ENCODE measurements at regions of chr13 and their contacts with region 1.

Region 1: GRCh38 chr13:49443704-49444523 is at the starts of genes CAB39L and SETDB2:
- DNase-seq: peak; percentile 99
- H3K4me3 Mint-ChIP-seq: peak within 1 kb of the TSS; percentile 92
- H3K27ac Mint-ChIP-seq: peak within 1 kb of the TSS; percentile 96
- H3K4me1 Mint-ChIP-seq: peaks cover 56% of the 10 kb centered on the region
- H3K27me3 Mint-ChIP-seq: no peaks in the 10 kb centered on the region
- total RNA-seq, gene CAB39L: 3.8 to 4.5 TPM
- total RNA-seq, gene SETDB2: 15.8 to 16.2 TPM

Region 2: DNA sequence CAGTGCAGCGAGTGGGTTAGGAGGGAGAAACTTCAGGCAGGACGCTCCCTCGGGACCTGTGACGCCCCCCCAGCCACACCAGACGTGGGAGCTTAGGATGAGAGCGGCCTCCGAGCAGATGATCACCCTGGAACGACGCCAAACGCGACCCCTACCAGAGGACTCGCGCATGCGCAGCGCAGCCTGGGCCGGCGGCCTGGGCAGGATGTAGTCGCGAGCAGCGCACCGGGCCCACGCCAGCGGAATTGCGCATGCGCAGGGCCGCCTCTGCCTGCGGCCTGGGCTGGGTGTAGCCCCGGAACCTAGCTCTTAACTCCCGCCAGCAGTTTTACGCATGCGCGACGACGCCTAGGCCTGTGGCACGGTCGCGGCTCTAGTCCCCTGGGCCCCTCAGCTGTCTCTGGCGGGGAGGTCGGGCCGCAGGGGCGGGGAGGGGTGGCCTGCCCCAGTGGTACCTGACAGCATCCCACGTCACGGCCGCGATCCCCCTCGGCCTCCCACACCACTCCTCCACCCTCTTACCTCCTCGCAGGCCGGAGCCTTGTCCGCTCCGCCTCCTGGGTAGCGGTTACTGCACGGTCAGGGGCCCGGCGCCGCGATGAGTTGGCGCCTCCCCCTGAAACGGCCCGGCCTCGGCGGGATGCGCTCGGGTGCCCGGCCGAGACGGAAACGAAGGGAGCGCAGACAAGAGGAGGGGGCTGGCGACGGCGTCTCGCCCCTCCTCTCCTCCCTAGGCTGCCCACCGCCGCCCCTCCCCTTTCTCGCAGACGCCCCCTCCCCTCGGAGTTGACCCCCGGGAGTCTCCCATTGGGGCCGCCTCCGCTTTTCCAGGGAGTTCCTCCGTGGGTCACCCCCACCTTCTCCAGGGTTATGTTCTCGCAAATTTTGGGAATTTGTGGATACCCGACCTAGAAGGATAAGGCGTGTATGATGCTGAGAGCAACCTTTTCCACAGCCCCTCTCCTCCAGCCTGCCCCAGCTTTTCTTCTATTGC is 911.1 kb before region 1 on chr13 and contains the start of gene RCBTB2:
- CTCF ChIA-PET with region 1: no interaction called
- intact Hi-C with region 1: loop called (anchors 1 kb)
- DNase-seq: peak; percentile 98
- H3K4me3 Mint-ChIP-seq: peak within 1 kb of the TSS; percentile 93
- H3K27ac Mint-ChIP-seq: peak within 1 kb of the TSS; percentile 97
- H3K4me1 Mint-ChIP-seq: peaks cover 17% of the 10 kb centered on the region
- H3K27me3 Mint-ChIP-seq: no peaks in the 10 kb centered on the region
- total RNA-seq, gene RCBTB2: 1.2 to 1.4 TPM

Region 3: GRCh38 chr13:49110122-49110912 is 333.6 kb before region 1 on chr13:
- CTCF ChIA-PET with region 1: no interaction called
- intact Hi-C with region 1: loop called (anchors 1 kb)
- DNase-seq: peak; percentile 87
- H3K4me3 Mint-ChIP-seq: peak overlapping the region; percentile 75
- H3K27ac Mint-ChIP-seq: peak overlapping the region; percentile 84
- H3K4me1 Mint-ChIP-seq: peaks cover 25% of the 10 kb centered on the region
- H3K27me3 Mint-ChIP-seq: no peaks in the 10 kb centered on the region

Region 4: DNA sequence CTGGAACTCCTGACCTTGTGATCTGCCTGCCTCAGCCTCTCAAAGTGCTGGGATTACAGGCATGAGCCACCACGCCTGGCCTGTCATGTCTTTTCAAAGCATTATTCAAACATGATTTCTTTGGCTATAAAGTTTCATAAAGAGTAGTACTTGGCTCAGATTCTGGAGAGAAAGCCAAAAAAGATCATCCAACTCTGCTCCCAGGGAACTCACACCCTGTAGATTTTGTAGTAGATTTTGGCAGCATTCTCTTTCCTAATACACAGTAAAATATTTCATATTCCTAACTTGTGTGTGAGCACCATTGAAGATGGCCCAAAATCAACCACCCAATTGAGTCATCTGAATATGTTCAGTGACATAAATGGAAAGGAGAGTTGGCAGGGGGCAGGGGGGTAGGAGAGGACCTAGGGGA is 48.5 kb before region 1 on chr13:
- CTCF ChIA-PET with region 1: no interaction called
- intact Hi-C with region 1: no loop called
- DNase-seq: no peak
- H3K4me3 Mint-ChIP-seq: no peak overlapping the region
- H3K27ac Mint-ChIP-seq: no peak overlapping the region
- H3K4me1 Mint-ChIP-seq: no peaks in the 10 kb centered on the region
- H3K27me3 Mint-ChIP-seq: no peaks in the 10 kb centered on the region

Region 5: GRCh38 chr13:49464621-49465325 is 20.9 kb after region 1 on chr13:
- CTCF ChIA-PET with region 1: no interaction called
- intact Hi-C with region 1: no loop called
- DNase-seq: no peak
- H3K4me3 Mint-ChIP-seq: no peak overlapping the region
- H3K27ac Mint-ChIP-seq: no peak overlapping the region
- H3K4me1 Mint-ChIP-seq: no peaks in the 10 kb centered on the region
- H3K27me3 Mint-ChIP-seq: no peaks in the 10 kb centered on the region

Region 6: DNA sequence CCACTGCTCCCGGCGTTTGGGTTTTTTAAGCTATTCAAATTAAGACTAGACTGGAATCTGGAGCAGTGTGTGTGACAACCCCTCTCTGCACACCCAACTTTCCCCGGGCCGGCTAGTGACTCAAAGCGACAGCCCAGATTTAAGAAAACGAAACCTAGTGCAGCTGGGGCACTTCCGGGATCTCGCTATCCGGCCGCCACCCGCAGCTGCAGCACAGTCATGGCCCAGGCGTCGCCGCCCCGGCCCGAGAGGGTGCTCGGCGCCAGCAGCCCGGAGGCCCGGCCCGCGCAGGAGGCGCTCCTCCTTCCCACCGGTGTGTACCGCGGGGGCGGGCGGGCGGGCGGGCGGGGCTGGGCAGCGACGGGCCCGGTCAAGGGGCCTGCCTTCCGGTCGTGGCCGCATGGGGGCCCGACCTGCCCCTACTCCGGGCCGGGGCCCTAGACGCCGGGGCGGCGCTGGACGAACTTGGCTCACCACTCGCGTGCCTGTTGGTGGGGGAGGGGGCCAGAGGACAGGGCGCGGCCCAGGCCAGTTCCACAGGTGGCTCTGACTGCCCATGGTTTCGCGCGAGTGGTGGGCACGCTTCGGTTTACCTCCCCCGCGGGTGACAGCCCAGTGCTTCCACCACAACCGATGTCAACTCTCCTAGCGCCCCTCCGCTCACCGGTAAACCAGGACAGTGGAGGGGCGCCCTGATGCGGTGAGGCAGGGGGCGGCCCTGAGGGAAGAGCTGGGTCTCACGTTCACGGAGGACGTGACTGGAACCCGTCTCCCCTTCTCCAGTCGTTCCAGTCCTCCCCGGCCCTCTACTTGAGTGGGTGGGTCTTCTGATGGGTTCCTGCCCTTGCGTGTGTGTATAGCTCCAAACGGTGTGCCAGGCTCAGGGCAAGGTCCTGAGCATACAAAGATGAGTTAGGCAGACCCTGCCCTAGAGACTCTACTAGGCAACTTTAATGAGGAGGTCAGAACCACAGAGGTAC is 52.2 kb after region 1 on chr13 and contains the start of gene PHF11:
- CTCF ChIA-PET with region 1: interaction called, 8 read pairs
- intact Hi-C with region 1: loop called (anchors 1 kb)
- DNase-seq: peak; percentile 95
- H3K4me3 Mint-ChIP-seq: peak within 1 kb of the TSS; percentile 91
- H3K27ac Mint-ChIP-seq: peak within 1 kb of the TSS; percentile 96
- H3K4me1 Mint-ChIP-seq: peaks cover 49% of the 10 kb centered on the region
- H3K27me3 Mint-ChIP-seq: no peaks in the 10 kb centered on the region
- total RNA-seq, gene PHF11: 91.4 to 96.9 TPM

Region 7: DNA sequence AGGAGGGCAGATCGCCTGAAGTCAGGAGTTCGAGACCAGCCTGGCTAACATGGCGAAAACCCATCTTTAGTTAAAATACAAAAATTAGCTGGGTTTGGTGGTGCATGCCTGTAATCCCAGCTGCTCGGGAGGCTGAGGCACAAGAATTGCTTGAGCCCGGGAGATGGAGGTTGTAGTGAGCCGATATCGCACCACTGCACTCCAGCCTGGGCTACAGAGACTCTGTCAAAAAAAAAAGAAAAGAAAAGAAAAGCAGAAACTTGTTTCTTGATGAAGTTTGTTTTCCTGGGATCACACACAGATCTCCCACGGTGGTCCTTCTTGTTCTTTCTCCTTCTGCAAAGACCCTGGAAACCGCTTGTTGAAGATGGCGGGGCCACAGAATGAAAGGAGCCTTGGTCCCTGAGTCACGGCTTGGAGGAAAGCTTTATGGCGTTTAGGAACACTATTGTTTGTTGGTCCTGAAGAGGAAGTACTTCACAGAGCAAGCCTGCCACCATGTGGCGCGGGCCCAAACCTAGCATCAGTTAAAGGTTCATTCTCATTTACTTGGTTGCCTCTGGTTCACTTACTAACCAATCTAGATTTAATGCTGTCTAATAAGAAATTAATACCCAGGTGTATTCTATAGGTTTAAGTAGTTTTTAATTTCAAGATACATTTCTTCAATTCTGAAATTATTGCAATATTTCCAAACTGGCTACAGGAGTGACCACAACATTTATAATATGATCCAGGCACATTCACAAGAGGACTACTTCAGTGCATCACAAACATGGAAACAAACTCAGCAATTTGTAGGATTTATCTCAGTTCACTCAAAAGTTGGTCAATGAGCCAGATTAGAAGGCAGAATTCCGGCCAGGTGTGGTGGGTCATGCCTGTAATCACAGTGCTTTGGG is 163.1 kb after region 1 on chr13:
- CTCF ChIA-PET with region 1: interaction called, 3 read pairs
- intact Hi-C with region 1: loop called (anchors 1 kb)
- DNase-seq: peak; percentile 92
- H3K4me3 Mint-ChIP-seq: peak overlapping the region; percentile 75
- H3K27ac Mint-ChIP-seq: peak overlapping the region; percentile 56
- H3K4me1 Mint-ChIP-seq: peaks cover 2% of the 10 kb centered on the region
- H3K27me3 Mint-ChIP-seq: no peaks in the 10 kb centered on the region

Region 8: GRCh38 chr13:49936085-49936940 is 492.4 kb after region 1 on chr13 and contains the start of gene SPRYD7:
- CTCF ChIA-PET with region 1: interaction called, 3 read pairs
- intact Hi-C with region 1: loop called (anchors 1 kb)
- DNase-seq: peak; percentile 96
- H3K4me3 Mint-ChIP-seq: peak within 1 kb of the TSS; percentile 90
- H3K27ac Mint-ChIP-seq: peak within 1 kb of the TSS; percentile 70
- H3K4me1 Mint-ChIP-seq: peaks cover 7% of the 10 kb centered on the region
- H3K27me3 Mint-ChIP-seq: peaks cover 2% of the 10 kb centered on the region
- total RNA-seq, gene SPRYD7: 2.5 to 2.6 TPM

Region 9: DNA sequence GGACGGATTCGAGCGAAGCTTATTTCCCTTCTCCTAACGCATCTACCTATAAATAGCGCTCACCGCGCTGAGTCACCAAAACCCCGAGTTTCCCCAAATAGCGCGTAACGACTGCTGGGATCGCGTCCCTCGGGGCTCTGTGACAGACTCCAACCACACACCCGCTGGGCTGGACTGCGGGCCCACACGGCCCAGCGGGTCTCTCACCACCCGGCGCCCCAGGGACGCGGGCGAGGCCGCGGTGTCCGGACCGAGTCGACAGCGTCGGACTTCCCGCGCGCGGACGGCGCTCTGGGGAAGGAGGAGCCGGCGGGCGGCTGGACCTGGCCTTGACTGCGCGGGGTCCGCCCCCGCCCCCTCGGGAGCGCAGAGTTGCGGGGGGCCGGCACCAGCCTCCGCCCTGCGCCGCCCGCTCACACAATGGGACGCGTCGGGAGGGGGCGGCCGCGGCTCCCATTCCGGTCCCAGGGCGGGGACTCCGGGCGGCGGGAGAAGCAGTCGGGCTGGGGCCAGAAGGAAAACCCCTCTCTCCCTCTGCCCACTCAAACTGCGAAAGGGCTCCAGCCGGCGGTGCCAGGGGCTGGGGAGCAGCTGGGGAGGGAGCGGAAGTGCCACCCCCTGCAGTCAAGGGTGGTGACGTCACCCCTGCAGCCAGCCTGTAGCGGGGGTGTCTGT is 680.1 kb after region 1 on chr13:
- CTCF ChIA-PET with region 1: no interaction called
- intact Hi-C with region 1: loop called (anchors 1 kb)
- DNase-seq: peak; percentile 89
- H3K4me3 Mint-ChIP-seq: peak overlapping the region; percentile 77
- H3K27ac Mint-ChIP-seq: peak overlapping the region; percentile 92
- H3K4me1 Mint-ChIP-seq: peaks cover 48% of the 10 kb centered on the region
- H3K27me3 Mint-ChIP-seq: peaks cover 15% of the 10 kb centered on the region

Measured in activated naive CD4-positive, alpha-beta T cell treated with anti-CD3 and anti-CD28 coated beads for 36 hours (primary cell).